HEK293 (cell line): ENCODE measurements at regions of chr1 and their contacts with region 1.

Region 1: DNA sequence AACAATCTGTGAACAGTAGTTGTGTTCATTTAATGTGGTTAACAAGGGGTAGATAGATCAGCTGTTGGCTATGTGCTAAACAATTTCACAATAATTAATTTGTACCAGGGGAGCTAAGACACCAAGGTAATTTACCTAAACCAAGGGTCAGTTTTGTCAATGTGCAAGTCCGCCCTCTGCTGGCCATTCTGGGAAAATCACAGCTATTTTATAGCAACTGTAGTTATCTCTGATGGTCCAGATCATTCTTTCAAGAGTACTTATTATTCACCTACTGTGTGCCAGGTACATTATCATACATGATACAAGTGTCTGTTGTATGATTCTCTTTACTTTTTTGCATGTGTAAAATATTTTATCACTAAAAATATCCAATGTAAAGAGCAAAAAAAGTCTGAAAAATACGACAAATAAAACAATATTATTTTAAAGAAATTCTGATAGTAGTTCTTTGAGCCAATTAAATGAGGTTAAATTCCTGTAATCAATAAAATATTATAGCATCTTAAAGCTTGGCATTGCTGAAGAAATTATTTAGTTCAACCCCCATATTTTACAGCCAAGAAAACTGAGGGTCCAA is 312.3 kb upstream of the FAM78B start:
- H3K4me3 ChIP-seq: no peak overlapping the region
- H3K27ac ChIP-seq: no peak overlapping the region
- H3K4me1 ChIP-seq: no peaks in the 10 kb centered on the region
- CTCF ChIP-seq: no peak

Region 2: DNA sequence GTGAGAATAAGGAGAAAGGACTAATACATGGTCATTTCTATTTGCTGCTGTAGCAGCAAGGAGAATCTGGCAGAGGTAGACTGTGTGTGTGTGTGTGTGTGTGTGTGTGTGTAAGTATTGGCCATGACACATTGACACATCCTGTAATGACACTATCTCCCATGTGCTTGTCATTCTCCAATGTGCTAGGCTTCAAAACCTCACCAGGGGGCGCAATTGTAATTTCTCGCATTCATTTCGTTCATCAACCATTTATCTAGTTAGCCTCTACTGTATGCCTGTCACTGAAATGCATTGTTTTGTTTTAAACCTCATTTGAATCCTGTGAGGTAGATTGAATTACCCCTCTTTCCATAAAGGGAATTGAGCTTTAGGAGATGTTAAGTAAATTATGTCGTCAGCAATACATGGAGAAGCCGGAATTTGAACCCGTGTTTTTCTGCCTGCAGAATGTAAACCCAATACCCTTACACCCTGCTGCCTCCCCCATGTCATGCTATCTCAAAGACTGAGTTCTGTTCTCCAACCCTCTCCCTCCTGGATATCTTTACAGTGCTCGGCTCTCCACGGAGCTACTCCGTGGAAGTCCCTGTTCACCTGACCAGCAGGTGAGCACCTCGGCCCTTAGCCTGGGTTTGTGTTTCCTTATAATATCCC is 550.9 kb before region 1 on chr1:
- CTCF ChIA-PET with region 1: interaction called, 19 read pairs
- POLR2A ChIA-PET with region 1: no interaction called
- H3K4me3 ChIP-seq: no peak overlapping the region
- H3K27ac ChIP-seq: no peak overlapping the region
- H3K4me1 ChIP-seq: no peaks in the 10 kb centered on the region
- CTCF ChIP-seq: peak; percentile 53

Region 3: DNA sequence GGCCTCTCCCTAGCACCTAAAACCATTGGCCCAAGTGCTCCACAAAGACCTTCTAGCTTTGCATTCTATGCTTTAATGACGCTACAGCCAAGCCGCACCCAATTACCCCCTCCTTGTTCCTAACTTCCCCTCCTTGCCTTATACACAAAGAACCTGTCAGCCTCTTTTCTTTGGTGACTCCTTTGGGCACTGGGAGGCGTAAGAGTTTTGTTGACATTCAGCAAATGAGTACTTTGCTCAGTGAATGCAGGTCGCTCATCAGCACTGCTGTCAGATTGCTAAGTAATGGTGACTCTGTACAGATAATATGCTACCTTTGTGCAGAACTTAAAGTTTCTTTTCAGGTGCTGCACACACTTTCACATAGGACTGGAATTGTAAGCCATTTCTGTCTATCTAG is 124.7 kb before region 1 on chr1:
- CTCF ChIA-PET with region 1: no interaction called
- POLR2A ChIA-PET with region 1: no interaction called
- H3K4me3 ChIP-seq: no peak overlapping the region
- H3K27ac ChIP-seq: no peak overlapping the region
- H3K4me1 ChIP-seq: no peaks in the 10 kb centered on the region
- CTCF ChIP-seq: no peak

Region 4: GRCh38 chr1:166464333-166464732 is 14.8 kb before region 1 on chr1:
- CTCF ChIA-PET with region 1: interaction called, 18 read pairs
- POLR2A ChIA-PET with region 1: no interaction called
- H3K4me3 ChIP-seq: no peak overlapping the region
- H3K27ac ChIP-seq: no peak overlapping the region
- H3K4me1 ChIP-seq: peaks cover 6% of the 10 kb centered on the region
- CTCF ChIP-seq: no peak

Region 5: DNA sequence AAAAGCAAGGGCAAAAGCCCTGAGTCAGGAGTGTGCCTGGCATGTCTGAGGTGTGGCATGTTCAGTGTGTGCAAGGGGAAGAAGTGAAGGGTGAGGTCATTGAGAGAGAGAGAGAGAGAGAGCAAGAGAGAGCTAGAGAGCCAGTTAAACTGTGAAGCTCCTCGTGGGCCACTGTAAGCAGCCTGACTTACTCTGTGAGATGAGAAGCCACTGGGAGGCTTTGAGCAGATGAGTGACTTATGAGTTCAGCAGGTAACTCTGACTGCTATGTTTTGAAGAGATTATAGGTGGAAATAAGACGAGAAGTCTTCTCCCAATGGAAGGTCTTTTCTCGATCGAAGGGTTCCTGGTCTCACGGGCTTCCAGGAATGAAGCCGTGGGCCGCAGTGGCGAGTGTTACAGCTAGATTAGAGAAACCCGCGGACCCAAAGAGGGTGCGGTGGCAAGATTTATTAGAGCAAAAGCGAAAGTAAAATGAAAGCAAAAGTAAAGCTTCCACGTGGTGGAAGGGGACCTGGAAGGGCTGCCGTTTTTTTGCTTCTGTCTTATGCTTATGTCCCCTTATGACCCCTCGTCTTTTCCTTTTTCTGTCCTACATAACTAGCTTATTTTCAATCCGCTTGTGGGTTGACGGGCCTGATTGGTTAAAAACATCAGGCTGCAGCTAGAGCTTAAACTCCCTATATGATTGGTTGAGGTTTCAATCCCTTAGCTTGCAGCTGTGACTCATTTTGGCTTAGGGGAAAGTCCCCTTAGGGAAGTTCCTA is 10.7 kb after region 1 on chr1:
- CTCF ChIA-PET with region 1: interaction called, 14 read pairs
- POLR2A ChIA-PET with region 1: no interaction called
- H3K4me3 ChIP-seq: no peak overlapping the region
- H3K27ac ChIP-seq: no peak overlapping the region
- H3K4me1 ChIP-seq: no peaks in the 10 kb centered on the region
- CTCF ChIP-seq: no peak

Region 6: GRCh38 chr1:166952002-166952746 is 473.0 kb after region 1 on chr1:
- CTCF ChIA-PET with region 1: no interaction called
- POLR2A ChIA-PET with region 1: no interaction called
- H3K4me3 ChIP-seq: no peak overlapping the region
- H3K27ac ChIP-seq: no peak overlapping the region
- H3K4me1 ChIP-seq: peaks cover 13% of the 10 kb centered on the region; the same call in 1 of the 2 replicates
- CTCF ChIP-seq: no peak